Prostate gland (tissue), 2 donors: ENCODE measurements at regions of chr10 and their contacts with region 1.

Region 1: DNA sequence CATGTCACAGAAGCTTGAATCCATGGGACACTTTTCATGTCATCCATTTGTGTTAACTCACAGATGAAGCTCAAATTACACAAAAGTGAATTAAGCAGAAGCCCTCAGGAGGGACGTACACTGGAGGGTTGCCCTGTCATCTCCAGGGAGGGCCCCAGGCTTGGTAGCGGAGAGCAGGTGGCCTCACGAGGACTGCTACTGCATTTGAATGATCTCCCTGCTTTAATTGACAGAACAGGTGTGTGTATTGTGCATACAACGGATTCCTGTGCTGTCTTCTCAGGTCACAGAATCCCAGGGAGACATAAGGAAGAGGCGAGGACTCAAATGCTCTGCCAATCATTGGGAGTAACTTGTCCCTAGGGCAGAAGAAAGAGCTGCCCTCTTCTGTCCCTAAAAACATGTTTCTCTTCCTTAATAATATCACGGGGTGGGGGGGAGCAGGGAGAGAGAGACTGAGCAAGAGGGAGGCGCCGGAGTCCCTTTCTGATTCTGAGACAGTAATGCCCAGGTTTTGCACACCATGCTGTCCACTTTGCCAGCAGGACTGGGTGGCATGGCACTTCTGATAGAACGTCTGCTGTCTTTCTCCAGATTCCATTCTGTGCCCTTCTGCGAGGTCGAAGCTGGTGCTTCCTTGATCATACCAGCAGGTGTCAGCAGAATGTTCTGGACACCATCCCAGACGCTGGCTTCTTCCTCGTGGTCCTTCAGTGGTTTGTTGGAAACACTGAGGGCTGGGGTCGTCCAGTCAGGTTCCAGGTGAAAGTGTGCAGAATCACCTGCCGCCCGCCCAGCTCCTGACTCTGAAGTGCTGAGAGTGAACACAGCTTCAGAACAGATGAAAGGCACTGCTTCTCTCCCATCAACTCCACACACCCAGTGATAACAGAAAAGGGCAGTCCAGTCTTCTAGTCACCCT is 26.2 kb upstream of the RASGEF1A start:
- DNase-seq: peak; percentile 36
- H3K4me3 ChIP-seq: no peak overlapping the region
- H3K27ac ChIP-seq: no peak overlapping the region
- H3K4me1 ChIP-seq: no peaks in the 10 kb centered on the region
- H3K27me3 ChIP-seq: no peaks in the 10 kb centered on the region
- CTCF ChIP-seq: peak in 3 of 4 experiments; percentile 50 to 73 (median 64)
- POLR2A ChIP-seq: no peak

Region 2: DNA sequence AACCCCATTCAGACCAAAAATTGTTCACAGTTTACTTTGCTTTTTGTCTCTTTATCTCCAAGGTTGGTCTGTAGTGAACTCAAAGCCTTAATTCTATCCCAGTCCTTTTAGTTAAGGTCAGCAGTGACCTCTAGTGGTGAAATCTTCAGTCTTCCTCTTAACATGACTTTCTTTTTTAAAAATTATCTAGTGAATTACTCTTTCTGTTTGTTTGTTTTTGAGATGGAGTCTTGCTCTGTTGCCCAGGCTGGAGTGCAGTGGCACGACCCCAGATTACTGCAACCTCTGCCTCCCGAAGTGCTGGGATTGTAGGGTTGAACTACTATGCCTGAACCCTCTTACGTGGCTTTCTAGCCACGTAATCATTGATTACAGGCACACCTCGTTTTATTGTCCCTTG is 168.9 kb after region 1 on chr10:
- intact Hi-C with region 1: loop called (anchors 2 kb)
- DNase-seq: peak; percentile 57
- H3K4me3 ChIP-seq: no peak overlapping the region
- H3K27ac ChIP-seq: no peak overlapping the region
- H3K4me1 ChIP-seq: no peaks in the 10 kb centered on the region
- H3K27me3 ChIP-seq: no peaks in the 10 kb centered on the region
- CTCF ChIP-seq: peak; percentile 34 to 74 (median 72)
- POLR2A ChIP-seq: no peak